Common myeloid progenitor, CD34-positive (primary cell): ENCODE measurements at regions of chr22 and their contacts with region 1.

Region 1: GRCh38 chr22:39215426-39216120 is 29.2 kb downstream of the PDGFB start:
- DNase-seq: peak; percentile 62 to 82 (median 77)
- H3K4me3 ChIP-seq: no peak overlapping the region
- H3K27ac ChIP-seq: no peak overlapping the region
- H3K4me1 ChIP-seq: peaks cover 0 to 6% (median 0%) of the 10 kb centered on the region in 4 experiments
- H3K27me3 ChIP-seq: peaks cover 0 to 47% (median 18%) of the 10 kb centered on the region in 5 experiments

Region 2: DNA sequence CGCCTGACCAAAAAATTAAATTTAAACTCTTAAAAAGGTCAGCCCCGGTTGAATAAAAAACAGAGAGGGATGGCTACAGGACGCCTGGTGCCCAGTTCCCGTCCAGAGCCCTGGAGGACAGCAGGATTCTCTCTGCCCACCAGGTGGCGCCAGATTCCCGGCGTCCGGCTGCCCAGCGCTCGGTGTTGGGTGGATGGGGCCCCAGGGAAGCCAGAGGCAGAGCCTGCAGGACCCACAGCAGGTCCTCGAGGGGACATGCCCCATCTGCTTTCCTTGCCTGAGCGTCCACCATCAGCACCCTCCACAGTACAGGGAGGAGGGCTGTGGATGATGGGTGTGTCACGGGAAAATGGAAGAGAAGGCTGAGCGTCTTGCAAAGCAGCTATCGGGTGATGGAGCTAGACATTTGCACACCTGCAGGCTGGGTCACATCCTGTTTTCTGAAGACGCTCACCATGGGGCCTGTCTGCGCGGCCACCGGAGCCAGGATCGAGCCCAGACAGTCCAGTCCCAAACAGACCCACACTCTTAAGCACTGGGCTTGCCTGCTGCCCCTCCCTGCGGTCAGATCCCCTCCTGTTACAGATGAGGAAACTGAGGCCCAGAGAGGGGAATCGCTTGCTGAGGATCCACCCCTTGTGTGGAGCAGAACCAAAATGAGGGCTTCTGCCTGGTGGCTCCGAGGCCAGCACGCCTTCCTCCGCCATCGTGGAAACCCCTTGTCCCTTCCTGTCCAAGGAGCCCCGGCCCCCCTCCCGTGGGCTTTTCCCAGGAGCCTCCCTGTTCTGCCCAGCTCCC is 44.5 kb before region 1 on chr22:
- CTCF ChIA-PET with region 1: interaction called, 10 read pairs
- POLR2A ChIA-PET with region 1: no interaction called
- DNase-seq: peak; percentile 64 to 73 (median 71)
- H3K4me3 ChIP-seq: peak overlapping the region in 3 of 7 experiments; percentile 19 to 57 (median 33)
- H3K27ac ChIP-seq: no peak overlapping the region
- H3K4me1 ChIP-seq: peaks cover 3 to 37% (median 27%) of the 10 kb centered on the region in 4 experiments
- H3K27me3 ChIP-seq: peaks cover 0 to 9% (median 4%) of the 10 kb centered on the region in 5 experiments

Region 3: GRCh38 chr22:39205338-39206021 is 10.1 kb before region 1 on chr22:
- CTCF ChIA-PET with region 1: no interaction called
- POLR2A ChIA-PET with region 1: no interaction called
- DNase-seq: peak in 2 of 3 donors; percentile 54 to 64
- H3K4me3 ChIP-seq: no peak overlapping the region
- H3K27ac ChIP-seq: no peak overlapping the region
- H3K4me1 ChIP-seq: peaks cover 0 to 2% (median 0%) of the 10 kb centered on the region in 4 experiments
- H3K27me3 ChIP-seq: peaks cover 0 to 50% (median 22%) of the 10 kb centered on the region in 5 experiments

Region 4: GRCh38 chr22:39230261-39231196 is 15.0 kb after region 1 on chr22:
- CTCF ChIA-PET with region 1: interaction called, 13 read pairs
- POLR2A ChIA-PET with region 1: no interaction called
- DNase-seq: peak in 1 of 3 donors; percentile 36
- H3K4me3 ChIP-seq: no peak overlapping the region
- H3K27ac ChIP-seq: no peak overlapping the region
- H3K4me1 ChIP-seq: peaks cover 0 to 35% (median 23%) of the 10 kb centered on the region in 4 experiments
- H3K27me3 ChIP-seq: peaks cover 0 to 94% (median 44%) of the 10 kb centered on the region in 5 experiments